Endothelial cell of umbilical vein (primary cell): ENCODE measurements at regions of chr3 and their contacts with region 1.

Region 1: GRCh38 chr3:113626503-113627371 is 69.7 kb downstream of the USF3 start:
- DNase-seq: peak; percentile 64
- H3K4me3 ChIP-seq: no peak overlapping the region
- H3K27ac ChIP-seq: no peak overlapping the region
- H3K4me1 ChIP-seq: peaks cover 4% of the 10 kb centered on the region
- H3K27me3 ChIP-seq: peaks cover 17 to 27% of the 10 kb centered on the region in 2 experiments
- CTCF ChIP-seq: peak; percentile 84 to 90
- POLR2A ChIP-seq: no peak

Region 2: GRCh38 chr3:113051302-113051711 is 575.4 kb before region 1 on chr3:
- CTCF ChIA-PET with region 1: interaction called, 3 read pairs
- POLR2A ChIA-PET with region 1: no interaction called
- dilution Hi-C with region 1: no loop called
- intact Hi-C with region 1: loop called (anchors 1 kb)
- DNase-seq: peak; percentile 82
- H3K4me3 ChIP-seq: no peak overlapping the region
- H3K27ac ChIP-seq: no peak overlapping the region
- H3K4me1 ChIP-seq: peaks cover 3% of the 10 kb centered on the region
- H3K27me3 ChIP-seq: peaks cover 0 to 11% of the 10 kb centered on the region in 2 experiments
- CTCF ChIP-seq: peak; percentile 75 to 79
- POLR2A ChIP-seq: no peak

Region 3: DNA sequence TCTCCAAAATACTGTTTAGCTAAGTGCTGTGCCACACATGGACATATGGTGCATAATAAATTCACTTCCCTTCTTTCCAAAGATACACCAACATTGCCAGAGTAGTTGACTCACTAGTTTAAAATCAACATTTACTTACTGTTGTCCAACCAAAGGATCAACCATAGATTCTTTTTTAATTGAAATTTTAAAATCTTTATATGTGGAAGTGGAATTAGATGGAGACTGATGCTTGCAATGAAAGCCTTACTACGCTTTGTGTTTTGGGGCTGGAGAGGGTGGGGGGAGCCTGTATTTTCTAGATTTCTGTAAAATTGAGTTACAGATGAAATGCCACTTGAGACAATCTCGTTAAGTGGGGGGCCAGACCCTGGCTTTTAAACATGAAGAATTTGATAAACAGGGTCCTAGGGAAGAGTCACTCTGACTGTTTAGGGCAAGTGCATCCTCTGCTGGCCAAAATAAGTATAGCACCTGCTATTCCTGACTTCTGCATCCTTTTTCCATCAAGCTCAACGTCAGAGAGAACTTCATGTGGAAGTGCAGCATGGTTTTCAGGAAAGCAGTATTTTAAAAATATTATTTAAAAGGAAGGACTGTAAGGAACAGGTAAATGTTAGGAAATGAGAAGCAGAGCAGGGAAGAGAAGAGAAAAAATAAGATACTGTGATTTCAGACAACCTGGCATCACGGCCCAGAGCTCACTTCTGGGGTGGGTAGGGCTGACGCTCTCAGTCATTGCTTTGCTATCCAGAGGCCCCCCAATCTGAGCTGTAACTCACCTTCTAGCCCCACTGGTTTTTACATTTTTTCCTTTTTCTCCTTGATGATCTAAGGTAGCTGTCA is 338.7 kb before region 1 on chr3:
- CTCF ChIA-PET with region 1: interaction called, 26 read pairs
- POLR2A ChIA-PET with region 1: no interaction called
- dilution Hi-C with region 1: no loop called
- intact Hi-C with region 1: loop called (anchors 1 kb)
- DNase-seq: peak; percentile 75
- H3K4me3 ChIP-seq: no peak overlapping the region
- H3K27ac ChIP-seq: no peak overlapping the region
- H3K4me1 ChIP-seq: peaks cover 8% of the 10 kb centered on the region
- H3K27me3 ChIP-seq: no peaks in the 10 kb centered on the region
- CTCF ChIP-seq: peak; percentile 89 to 95
- POLR2A ChIP-seq: no peak

Region 4: DNA sequence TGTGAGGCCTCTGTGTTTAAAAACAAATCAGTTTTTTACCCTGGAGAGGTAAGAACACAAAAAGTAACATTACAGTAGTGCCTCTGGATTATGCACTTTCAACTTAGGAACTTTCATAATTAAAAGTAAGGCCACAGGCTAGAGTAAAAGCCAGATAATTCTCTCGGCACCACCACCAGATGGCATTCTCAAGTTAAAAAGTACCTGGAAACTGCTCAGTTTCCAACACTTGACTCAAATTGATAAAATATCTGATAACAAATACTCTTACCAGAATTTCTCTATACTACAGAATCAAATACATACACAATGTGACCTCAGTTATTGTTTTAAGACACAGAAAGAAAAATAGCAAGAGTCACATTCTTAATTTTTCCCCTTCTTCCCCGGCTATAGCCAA is 131.7 kb before region 1 on chr3:
- CTCF ChIA-PET with region 1: interaction called, 71 read pairs
- POLR2A ChIA-PET with region 1: no interaction called
- dilution Hi-C with region 1: no loop called
- intact Hi-C with region 1: loop called (anchors 1 kb)
- DNase-seq: peak; percentile 61
- H3K4me3 ChIP-seq: no peak overlapping the region
- H3K27ac ChIP-seq: no peak overlapping the region
- H3K4me1 ChIP-seq: peaks cover 25% of the 10 kb centered on the region
- H3K27me3 ChIP-seq: no peaks in the 10 kb centered on the region
- CTCF ChIP-seq: peak in 1 of 2 donors; percentile 38
- POLR2A ChIP-seq: no peak

Region 5: DNA sequence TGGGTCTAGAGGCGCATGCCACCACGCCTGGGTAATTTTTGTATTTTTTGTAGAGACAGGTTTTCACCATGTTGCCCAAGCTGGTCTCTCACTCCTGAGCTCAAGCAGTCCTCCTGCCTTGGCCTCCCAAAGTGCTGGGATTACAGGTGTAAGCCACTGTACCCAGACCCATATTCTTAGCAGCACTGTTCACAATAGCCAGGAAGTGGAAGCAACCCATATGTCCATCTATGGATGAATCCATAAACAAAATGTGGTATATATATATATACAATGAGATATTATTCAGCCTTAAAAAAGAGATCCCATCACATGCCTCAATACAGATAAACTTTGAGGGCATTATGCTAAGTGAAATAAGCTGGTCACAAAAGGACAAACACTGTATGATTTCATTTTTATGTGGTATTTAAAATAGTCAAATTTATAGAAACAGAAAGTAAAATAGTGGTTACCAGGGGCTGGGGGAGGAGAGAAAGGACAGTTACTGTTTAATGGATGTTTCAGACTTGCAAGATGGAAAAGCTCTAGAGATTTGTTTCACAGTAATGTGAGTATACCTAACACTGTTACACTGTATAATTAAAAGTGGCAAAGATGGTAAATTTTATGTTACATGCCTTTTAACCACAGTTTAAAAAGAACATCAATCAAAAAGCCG is 176.2 kb after region 1 on chr3:
- CTCF ChIA-PET with region 1: no interaction called
- POLR2A ChIA-PET with region 1: no interaction called
- dilution Hi-C with region 1: no loop called
- intact Hi-C with region 1: no loop called
- DNase-seq: no peak
- H3K4me3 ChIP-seq: no peak overlapping the region
- H3K27ac ChIP-seq: no peak overlapping the region
- H3K4me1 ChIP-seq: peaks cover 34% of the 10 kb centered on the region
- H3K27me3 ChIP-seq: no peaks in the 10 kb centered on the region
- CTCF ChIP-seq: no peak
- POLR2A ChIP-seq: no peak